Activated T-helper 2 cell treated with anti-CD3 and anti-CD28 coated beads, Interferon-gamma antibody, Interleukin-2, Interleukin-4, amounts not matched to agents 10 μg/mL and 5 μg/mL and 100 μg/mL, durations not matched to agents 14 hours and 24 hours and 36 hours (primary cell): ENCODE measurements at regions of chr5 and their contacts with region 1.

Region 1: GRCh38 chr5:119397518-119398380 is 41.9 kb downstream of the TNFAIP8 start:
- DNase-seq: no peak
- H3K4me3 Mint-ChIP-seq: peak overlapping the region; percentile 17
- H3K27ac Mint-ChIP-seq: peak overlapping the region; percentile 87
- H3K4me1 Mint-ChIP-seq: peaks cover 59% of the 10 kb centered on the region
- H3K27me3 Mint-ChIP-seq: no peaks in the 10 kb centered on the region

Region 2: DNA sequence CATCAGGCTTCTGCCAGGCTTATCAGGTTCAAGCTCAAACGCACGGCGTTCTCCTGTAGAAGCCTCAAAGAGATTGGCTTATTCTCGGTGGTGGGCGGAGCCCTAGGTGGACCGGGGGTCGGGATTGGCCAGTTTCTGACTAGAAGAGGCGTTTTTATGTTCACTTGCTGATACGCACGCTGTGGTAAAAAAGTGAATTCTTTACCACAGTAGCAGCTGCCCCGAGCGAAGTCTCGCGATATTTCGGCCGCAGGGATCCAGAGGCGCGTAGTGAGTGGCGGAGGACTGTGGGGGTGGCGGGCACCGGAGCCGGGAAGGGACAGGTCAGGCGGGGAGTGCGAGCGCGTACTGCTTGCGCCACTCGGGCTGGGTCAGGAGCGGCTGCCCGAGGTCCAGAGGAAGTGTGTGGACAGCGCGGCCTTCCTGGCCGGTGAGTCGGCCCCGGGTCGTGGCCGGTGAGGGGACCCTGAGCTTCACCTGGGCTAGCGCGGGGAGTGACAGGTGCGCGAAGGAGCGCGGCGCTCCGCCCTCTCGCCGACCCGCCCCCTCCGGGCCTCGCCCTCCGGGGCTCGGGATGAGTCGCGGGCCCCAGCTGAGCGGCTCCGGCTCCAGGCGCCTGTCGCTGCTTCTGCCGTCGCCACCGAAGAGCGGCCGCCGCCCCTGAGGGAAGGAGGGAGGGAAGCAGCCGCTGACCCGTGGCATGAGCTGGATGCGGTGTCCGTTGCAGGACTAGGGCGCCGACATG is 326.7 kb before region 1 on chr5 and contains the start of gene DMXL1:
- intact Hi-C with region 1: loop called (anchors 2 kb)
- DNase-seq: peak; percentile 97
- H3K4me3 Mint-ChIP-seq: peak within 1 kb of the TSS; percentile 98
- H3K27ac Mint-ChIP-seq: peak within 1 kb of the TSS; percentile 99
- H3K4me1 Mint-ChIP-seq: peaks cover 33% of the 10 kb centered on the region
- H3K27me3 Mint-ChIP-seq: no peaks in the 10 kb centered on the region
- total RNA-seq, gene DMXL1: 26.7 and 29.3 TPM in 2 replicates

Region 3: DNA sequence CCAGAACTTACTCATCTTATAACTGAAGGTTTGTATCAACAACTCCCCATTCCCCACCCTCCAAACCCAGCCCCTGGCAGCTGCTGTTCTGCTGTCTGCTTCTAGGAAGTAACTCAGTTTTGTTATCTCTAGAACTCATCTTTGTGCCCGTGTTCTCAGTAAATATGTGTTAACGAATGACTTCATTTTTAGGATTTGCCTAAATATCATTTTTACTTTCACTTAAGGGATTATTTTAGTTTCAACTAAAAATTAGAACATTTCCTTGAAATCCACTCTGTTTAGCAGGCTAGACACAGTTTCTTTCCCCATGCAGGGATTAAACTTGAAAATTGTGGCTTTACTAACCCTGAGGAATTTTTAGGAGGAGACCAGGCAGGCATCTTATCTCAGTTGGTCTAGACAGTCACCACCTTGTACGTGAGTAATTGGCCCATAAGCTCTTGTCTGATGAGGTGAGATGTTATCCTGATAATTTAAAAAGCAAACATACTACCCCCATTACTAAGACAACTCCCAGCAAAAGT is 110.1 kb before region 1 on chr5:
- intact Hi-C with region 1: loop called (anchors 1 kb)
- DNase-seq: peak; percentile 47
- H3K4me3 Mint-ChIP-seq: peak overlapping the region; percentile 77
- H3K27ac Mint-ChIP-seq: peak overlapping the region; percentile 97
- H3K4me1 Mint-ChIP-seq: peaks cover 91% of the 10 kb centered on the region
- H3K27me3 Mint-ChIP-seq: no peaks in the 10 kb centered on the region

Region 4: DNA sequence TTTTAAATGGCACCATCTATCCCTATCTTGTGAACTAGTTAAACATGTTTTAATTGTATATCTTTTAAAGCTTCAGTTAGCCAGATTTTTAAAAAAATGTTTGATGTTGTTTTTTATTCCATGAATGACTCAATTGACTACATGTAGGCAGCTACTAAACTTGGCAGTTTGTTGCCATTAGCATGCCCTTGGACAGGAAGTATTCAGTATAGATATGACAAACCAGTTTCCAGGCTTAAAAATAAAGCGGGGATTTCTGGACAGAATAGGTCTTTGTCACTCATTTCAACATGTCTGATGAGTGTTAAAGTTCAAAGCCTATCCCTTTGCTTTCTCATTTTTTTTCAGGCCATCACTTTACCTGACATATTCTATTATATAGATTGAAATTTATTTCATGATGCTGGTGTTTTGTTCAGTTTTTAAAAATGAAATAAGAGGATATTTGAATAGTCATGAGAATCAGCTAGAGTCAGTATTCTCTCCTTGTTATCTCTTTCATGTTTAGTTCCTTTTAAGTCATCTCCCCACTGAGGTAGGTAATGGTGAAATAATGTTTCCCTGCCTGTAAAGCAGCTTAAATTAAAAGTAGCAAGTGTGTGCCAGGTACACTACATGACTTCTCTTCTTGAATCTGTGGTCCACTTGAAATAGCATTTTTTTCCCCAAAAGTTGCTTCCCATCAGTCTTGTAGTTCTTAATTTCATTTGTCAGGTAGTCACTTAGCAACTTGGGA is 30.1 kb before region 1 on chr5:
- intact Hi-C with region 1: loop called (anchors 1 kb)
- DNase-seq: no peak
- H3K4me3 Mint-ChIP-seq: peak overlapping the region; percentile 73
- H3K27ac Mint-ChIP-seq: peak overlapping the region; percentile 92
- H3K4me1 Mint-ChIP-seq: peaks cover 74% of the 10 kb centered on the region
- H3K27me3 Mint-ChIP-seq: no peaks in the 10 kb centered on the region